AG04449 (cell line): ENCODE measurements at regions of chr11 and their contacts with region 1.

Region 1: DNA sequence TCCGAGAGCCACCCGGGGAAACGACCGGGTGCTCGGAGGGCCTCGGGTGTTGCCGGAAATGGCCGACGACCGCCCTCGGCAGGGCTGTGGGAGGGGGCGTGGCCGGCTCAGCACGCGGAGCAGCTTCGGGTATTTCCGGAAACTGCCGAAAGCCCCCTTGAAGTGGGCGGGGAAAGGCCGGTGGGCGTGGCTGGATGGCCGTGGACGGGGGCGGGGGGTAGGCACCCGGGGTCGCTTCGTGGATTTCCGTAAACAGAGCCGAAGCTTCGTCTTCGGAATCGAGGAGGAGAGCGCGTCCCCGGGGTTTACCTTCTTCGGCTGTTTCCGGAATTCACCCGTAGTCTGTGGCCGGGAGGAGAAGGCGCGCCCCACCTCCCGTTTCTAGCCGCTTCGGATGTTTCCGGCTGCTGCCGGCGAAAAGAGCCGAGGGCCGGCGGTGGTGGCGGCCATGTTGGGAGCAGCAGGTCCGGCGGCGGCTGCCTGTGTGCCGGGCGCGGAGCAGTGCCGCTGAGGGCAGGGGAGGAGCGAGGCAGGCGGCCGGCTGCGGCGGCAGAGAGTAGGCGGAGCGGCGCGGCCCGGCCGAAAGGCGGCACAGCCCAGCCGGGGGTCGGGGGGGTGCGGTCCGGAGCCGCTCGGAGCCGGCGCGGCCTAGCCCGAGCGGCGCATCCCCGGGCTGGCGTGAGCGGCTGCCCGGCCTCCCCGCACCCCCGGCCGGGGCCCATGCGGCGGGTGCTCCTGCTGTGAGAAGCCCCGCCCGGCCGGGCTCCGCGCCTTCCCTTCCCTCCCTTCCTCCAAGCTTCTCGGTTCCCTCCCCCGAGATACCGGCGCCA is at the start of gene MARK2:
- DNase-seq: peak; percentile 79
- H3K4me3 ChIP-seq: peak within 1 kb of the TSS; percentile 78
- CTCF ChIP-seq: no peak

Region 2: DNA sequence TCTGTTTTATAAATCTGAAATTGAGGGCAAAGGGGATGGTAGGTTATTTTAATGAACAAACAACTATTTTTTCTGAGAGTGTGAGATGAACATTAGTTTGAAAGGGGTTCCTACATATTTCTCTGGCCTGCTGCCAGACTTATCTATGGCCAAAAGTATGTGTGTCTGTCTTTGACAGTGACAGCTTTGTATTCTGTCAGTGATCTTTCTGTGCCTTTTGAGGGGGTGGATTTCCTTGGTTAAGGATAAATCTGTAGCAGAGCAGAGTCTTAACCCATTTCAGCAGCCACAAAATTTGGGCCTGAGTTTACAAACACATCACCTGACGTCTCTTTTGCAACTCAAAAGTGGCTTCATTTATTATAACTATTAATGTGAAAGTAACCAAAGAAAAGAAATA is 101.2 kb before region 1 on chr11:
- CTCF ChIA-PET with region 1: no interaction called
- POLR2A ChIA-PET with region 1: no interaction called
- DNase-seq: no peak
- H3K4me3 ChIP-seq: no peak overlapping the region
- CTCF ChIP-seq: no peak

Region 3: DNA sequence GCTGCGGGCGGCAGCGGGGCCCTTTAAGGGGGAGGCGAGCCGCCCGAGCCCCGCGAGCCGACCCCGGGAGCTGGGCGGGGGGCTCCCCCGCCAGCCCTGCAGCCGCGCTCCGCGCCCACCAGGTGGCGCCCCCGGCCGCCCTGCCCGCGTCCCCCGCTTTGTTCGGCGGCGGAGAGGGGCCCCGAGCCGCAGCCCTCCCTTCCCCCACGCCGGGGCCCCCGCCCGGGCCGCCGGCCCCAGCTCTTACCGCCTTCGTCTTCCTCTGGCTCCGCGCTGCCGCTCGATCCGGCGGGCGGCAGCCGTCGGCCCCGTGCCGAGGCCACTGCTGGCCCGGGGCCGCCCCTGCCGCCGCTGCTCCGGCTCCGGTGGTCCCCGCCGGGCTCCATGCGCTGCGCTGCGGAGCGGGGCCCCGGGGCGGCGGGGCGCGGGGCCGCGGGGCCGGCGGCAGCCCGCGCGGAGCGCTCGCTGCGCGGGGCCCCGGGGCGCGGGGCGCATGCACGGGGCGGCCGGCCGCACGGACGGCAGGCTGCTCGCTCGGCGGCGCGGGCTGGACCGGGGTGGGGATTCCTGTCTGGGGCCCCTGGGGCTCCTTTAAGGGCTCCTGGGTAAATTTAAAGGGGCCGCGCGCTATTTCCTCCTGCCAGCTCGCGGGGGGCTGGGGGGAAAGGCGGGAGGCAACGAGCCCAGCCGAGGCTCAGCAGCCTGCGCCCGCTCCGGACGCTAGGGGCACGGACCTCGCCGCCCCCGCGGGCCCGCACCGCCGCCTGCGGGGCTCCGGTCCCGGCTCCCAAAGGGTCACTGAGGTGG is 70.5 kb before region 1 on chr11 and contains the start of gene ZFTA:
- CTCF ChIA-PET with region 1: interaction called, 36 read pairs
- POLR2A ChIA-PET with region 1: interaction called, 5 read pairs
- DNase-seq: no peak
- H3K4me3 ChIP-seq: peak within 1 kb of the TSS; percentile 70
- CTCF ChIP-seq: peak; percentile 57

Region 4: DNA sequence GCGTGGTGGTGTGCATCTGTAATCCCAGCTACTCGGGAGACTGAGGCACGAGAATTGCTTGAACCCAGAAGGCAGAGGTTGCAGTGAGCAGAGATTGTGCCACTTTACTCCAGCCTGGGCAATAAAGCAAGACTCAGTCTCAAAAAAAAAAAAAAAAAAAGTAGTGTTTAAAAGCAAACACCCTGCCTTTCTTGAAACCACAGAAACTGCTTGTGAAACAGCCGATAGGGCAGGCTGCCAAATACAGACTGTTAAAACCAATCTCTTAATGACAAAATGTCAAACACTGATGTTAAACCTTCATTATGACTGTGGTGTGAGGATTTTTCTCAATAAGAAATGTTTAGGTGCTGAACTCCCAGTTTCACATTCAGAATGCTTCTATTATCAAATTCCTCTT is 27.3 kb after region 1 on chr11:
- CTCF ChIA-PET with region 1: interaction called, 18 read pairs
- POLR2A ChIA-PET with region 1: no interaction called
- DNase-seq: no peak
- H3K4me3 ChIP-seq: no peak overlapping the region
- CTCF ChIP-seq: no peak

Region 5: GRCh38 chr11:63916837-63917691 is 78.2 kb after region 1 on chr11 and contains the start of gene RCOR2:
- CTCF ChIA-PET with region 1: interaction called, 47 read pairs
- POLR2A ChIA-PET with region 1: interaction called, 4 read pairs
- DNase-seq: no peak
- H3K4me3 ChIP-seq: peak within 1 kb of the TSS; percentile 57
- CTCF ChIP-seq: no peak

Region 6: DNA sequence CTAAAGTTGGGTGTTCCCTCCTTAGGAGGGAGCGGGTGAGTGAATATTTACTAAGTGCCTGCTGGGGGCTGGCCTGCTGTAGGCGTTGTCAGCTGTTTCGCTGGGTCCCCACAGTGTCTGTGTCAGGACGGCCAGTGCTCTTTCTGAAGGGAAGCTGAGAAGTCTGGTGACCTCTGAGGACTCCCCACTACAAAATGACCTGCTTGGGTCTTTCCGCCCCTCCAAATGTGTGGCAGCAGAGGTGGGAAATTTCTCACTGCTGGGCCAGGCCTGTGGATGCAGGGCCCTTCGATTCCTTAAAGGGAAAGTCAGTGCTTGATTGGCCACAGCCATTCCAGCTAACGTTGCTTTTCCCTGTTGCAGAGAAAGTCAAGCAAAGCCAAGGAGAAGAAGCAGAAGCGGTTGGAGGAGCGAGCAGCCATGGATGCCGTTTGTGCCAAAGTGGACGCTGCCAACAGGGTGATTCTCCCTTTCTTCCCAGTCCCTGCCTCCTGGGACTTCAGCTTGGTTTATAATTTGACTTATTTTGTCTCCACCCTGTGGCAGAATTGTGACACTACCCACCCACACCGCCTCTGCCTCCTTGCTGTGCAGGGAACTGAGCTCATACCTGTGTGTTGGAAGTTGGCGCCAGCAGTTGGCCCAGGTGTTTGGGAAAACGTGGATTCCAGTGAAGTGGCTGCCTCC is 106.7 kb after region 1 on chr11:
- CTCF ChIA-PET with region 1: interaction called, 639 read pairs
- POLR2A ChIA-PET with region 1: no interaction called
- DNase-seq: peak; percentile 24
- H3K4me3 ChIP-seq: no peak overlapping the region
- CTCF ChIP-seq: peak; percentile 70

Region 7: DNA sequence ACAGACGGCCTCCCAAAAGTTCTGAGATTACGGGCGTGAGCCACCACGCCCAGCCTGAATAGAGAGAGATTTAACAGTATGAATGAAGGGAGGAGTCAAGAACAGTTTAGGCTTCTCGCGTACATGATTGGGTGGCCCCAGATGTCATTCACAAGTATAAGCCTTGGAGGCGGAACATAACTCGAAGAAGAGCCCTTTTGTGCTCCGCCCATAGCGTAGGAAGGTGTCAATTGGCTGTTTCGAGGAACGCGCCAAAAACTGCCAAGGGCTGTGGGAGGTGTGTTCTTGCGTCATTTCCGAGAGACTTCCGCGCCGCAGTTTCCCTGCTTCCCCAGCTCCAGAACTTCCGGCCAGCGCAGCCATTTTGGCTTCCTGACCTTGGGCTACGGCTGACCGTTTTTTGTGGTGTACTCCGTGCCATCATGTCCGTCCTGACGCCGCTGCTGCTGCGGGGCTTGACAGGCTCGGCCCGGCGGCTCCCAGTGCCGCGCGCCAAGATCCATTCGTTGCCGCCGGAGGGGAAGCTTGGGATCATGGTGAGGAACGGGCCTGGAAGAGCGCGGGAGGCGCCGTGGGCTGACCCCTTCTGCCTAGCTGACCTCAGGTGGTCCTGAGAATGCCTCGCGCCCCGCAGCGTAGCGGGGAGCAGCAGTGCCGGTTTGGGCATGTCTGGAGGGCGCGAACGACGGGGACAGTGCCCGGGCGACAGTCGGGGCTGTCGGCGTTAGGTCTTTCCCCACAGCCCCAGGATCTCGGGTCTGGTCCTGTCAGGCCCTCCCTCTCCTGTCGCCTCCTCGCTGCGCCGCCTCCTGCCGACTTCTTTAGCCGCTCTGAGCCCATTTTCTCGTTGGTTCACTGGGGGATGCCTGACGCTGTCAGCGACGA is 135.6 kb after region 1 on chr11 and contains the start of gene COX8A:
- CTCF ChIA-PET with region 1: interaction called, 16 read pairs
- POLR2A ChIA-PET with region 1: no interaction called
- DNase-seq: peak; percentile 98
- H3K4me3 ChIP-seq: peak within 1 kb of the TSS; percentile 98
- CTCF ChIP-seq: peak; percentile 31

Region 8: GRCh38 chr11:64040684-64041322 is 201.9 kb after region 1 on chr11:
- CTCF ChIA-PET with region 1: no interaction called
- POLR2A ChIA-PET with region 1: no interaction called
- DNase-seq: no peak
- H3K4me3 ChIP-seq: no peak overlapping the region
- CTCF ChIP-seq: peak; percentile 51